CD14-positive monocyte (primary cell): ENCODE measurements at regions of chr9 and their contacts with region 1.

Region 1: DNA sequence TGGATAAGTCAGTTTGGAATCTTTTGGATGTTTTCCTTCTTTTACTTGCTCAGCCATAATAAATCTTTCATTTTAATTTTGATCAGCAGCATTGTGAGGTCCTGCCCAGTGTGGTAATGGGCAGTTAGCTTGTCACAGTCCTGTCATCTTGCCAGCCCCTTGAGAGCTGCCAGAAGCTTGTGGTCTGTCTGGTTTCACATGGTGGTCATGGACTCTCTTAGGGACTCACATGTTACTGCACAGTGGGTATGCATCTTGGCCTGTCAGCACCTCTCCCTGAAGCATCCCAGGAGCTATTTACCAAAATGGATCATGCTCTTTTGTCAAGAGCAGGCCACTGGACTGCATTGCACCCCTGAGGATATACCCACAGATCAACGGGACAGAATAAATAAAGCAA is 60.3 kb downstream of the DAPK1 start:
- DNase-seq: no peak
- H3K4me3 ChIP-seq: no peak overlapping the region
- H3K4me3 Mint-ChIP-seq: no peak overlapping the region
- H3K27ac ChIP-seq: no peak overlapping the region
- H3K27ac Mint-ChIP-seq: peak overlapping the region in 4 of 7 donors; percentile 52 to 96 (median 76)
- H3K4me1 ChIP-seq: peaks cover 50 to 58% of the 10 kb centered on the region in 2 donors
- H3K4me1 Mint-ChIP-seq: peaks cover 61% of the 10 kb centered on the region
- H3K27me3 ChIP-seq: no peaks in the 10 kb centered on the region
- H3K27me3 Mint-ChIP-seq: peaks cover 0 to 6% (median 0%) of the 10 kb centered on the region in 3 donors
- CTCF ChIP-seq: no peak

Region 2: GRCh38 chr9:87336914-87337333 is 221.1 kb before region 1 on chr9:
- intact Hi-C with region 1: loop called in 1 of 2 experiments (anchors 10 kb)
- DNase-seq: peak; percentile 50 to 70 (median 65)
- H3K4me3 ChIP-seq: peak overlapping the region in 1 of 3 experiments; percentile 21
- H3K4me3 Mint-ChIP-seq: peak overlapping the region; percentile 54 to 91
- H3K27ac ChIP-seq: no peak overlapping the region
- H3K27ac Mint-ChIP-seq: no peak overlapping the region
- H3K4me1 ChIP-seq: peaks cover 6 to 7% of the 10 kb centered on the region in 2 donors
- H3K4me1 Mint-ChIP-seq: peaks cover 12% of the 10 kb centered on the region
- H3K27me3 ChIP-seq: peaks cover 18 to 21% of the 10 kb centered on the region in 2 donors
- H3K27me3 Mint-ChIP-seq: peaks cover 19 to 30% (median 30%) of the 10 kb centered on the region in 3 donors
- CTCF ChIP-seq: peak; percentile 86

Region 3: DNA sequence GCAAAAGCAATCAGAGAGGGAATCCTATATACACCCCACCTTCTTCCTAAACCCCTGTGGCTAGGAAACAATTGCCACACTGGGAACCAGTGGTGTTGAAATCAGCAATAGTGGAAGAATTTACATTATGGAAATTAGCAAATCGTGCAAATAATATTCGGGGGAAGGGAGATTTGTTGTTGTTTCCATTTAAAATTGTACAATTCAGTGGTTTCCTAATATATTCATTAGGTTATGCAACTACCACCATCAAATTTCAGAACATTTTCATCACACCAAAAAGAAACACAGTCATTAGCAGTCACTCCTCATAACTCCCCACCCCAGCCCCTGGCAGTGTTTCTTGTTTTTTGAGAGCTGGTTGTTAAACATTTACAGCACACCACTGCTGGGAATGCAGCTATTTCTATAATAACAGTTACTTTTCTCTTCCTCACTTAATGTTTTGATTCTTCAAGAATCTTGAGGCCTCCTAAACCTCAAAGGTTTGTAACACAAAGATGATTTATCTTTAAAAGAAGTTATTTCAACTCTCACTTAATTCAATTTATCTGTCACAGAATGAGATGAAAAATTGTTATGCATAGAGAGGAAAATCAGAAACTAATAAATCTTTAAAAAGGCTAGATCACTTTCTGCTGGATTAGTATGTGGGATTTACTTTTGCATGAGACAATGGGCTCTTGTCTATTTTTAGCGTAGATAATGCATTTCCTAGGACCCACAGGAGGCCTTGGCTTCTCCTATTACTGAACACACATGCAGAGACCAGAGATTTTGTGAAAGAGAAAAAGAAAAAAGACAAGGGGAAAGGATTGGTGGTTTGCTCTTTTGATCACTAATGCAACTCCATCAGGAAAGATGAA is 152.1 kb before region 1 on chr9:
- intact Hi-C with region 1: loop called in 1 of 2 experiments (anchors 10 kb)
- DNase-seq: peak; percentile 77 to 91 (median 86)
- H3K4me3 ChIP-seq: peak overlapping the region in 1 of 3 experiments; percentile 35
- H3K4me3 Mint-ChIP-seq: peak overlapping the region in 1 of 2 donors; percentile 54
- H3K27ac ChIP-seq: peak overlapping the region; percentile 49 to 93
- H3K27ac Mint-ChIP-seq: peak overlapping the region; percentile 91 to 97 (median 94)
- H3K4me1 ChIP-seq: peaks cover 30 to 36% of the 10 kb centered on the region in 2 donors
- H3K4me1 Mint-ChIP-seq: peaks cover 40% of the 10 kb centered on the region
- H3K27me3 ChIP-seq: no peaks in the 10 kb centered on the region
- H3K27me3 Mint-ChIP-seq: peaks cover 1 to 3% (median 2%) of the 10 kb centered on the region in 3 donors
- CTCF ChIP-seq: no peak

Region 4: DNA sequence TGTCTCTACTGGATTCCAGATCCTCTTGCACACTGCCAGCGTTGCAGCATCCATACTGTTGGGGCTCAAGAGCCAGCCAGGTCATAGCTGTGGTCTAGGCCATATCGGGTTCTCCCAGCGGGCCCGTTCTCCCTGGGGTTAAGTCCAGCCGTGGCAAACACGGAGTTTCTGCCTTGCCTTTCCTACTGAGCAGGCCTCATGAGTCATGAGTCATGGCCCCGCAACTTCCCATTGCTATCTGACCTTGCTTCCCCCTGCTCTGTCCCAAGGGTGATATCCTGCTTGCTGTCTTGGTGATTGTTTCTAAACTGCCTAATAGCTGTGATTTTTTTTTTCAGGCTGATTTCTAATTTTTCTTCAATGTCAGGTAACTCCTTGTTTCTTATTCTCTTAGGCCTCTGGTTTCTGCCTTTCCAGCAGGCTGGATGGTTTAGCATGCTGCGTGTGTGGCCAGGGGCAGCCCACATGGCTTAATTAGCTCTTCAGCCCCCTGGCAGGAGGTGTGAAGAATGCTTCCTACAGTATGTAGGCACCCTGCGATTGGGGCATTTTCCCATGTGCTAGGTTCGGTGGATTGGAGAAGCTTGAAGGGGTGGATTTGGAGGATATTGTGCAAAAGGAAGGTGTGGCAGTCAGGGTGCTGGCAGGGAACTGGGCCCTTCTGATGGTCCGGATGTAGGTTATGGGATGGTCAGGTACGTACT is 41.6 kb before region 1 on chr9:
- intact Hi-C with region 1: loop called in 1 of 2 experiments (anchors 5 kb)
- DNase-seq: peak; percentile 94 to 97 (median 97)
- H3K4me3 ChIP-seq: peak overlapping the region in 1 of 3 experiments; percentile 52
- H3K4me3 Mint-ChIP-seq: peak overlapping the region; percentile 18 to 87
- H3K27ac ChIP-seq: peak overlapping the region; percentile 88
- H3K27ac Mint-ChIP-seq: peak overlapping the region; percentile 93 to 99 (median 98)
- H3K4me1 ChIP-seq: peaks cover 79 to 83% of the 10 kb centered on the region in 2 donors
- H3K4me1 Mint-ChIP-seq: peaks cover 85% of the 10 kb centered on the region
- H3K27me3 ChIP-seq: no peaks in the 10 kb centered on the region
- H3K27me3 Mint-ChIP-seq: peaks cover 0 to 2% (median 0%) of the 10 kb centered on the region in 3 donors
- CTCF ChIP-seq: no peak

Region 5: DNA sequence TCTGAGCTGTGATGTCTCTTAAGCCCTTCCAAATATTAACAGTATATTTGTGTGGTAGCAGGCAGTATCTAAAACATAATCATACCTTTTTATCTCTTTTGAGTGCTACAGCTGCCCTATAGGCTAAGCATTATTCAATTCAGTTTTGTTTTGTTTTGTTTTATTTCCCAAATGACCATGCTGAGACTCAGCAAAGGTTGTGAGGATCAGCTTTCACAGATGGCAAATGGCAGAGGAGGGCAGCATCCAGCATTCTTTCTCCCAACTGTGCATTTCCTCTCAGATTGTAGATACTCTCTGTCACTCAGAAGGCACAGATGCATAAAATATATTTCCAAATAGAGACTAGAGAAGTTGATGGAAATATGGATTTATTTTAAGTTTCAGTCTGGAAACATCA is 30.3 kb after region 1 on chr9:
- intact Hi-C with region 1: no loop called
- DNase-seq: no peak
- H3K4me3 ChIP-seq: no peak overlapping the region
- H3K4me3 Mint-ChIP-seq: no peak overlapping the region
- H3K27ac ChIP-seq: peak overlapping the region in 1 of 2 donors; percentile 35
- H3K27ac Mint-ChIP-seq: no peak overlapping the region
- H3K4me1 ChIP-seq: peaks cover 24 to 45% of the 10 kb centered on the region in 2 donors
- H3K4me1 Mint-ChIP-seq: peaks cover 34% of the 10 kb centered on the region
- H3K27me3 ChIP-seq: no peaks in the 10 kb centered on the region
- H3K27me3 Mint-ChIP-seq: peaks cover 0 to 2% (median 0%) of the 10 kb centered on the region in 3 donors
- CTCF ChIP-seq: no peak

Region 6: DNA sequence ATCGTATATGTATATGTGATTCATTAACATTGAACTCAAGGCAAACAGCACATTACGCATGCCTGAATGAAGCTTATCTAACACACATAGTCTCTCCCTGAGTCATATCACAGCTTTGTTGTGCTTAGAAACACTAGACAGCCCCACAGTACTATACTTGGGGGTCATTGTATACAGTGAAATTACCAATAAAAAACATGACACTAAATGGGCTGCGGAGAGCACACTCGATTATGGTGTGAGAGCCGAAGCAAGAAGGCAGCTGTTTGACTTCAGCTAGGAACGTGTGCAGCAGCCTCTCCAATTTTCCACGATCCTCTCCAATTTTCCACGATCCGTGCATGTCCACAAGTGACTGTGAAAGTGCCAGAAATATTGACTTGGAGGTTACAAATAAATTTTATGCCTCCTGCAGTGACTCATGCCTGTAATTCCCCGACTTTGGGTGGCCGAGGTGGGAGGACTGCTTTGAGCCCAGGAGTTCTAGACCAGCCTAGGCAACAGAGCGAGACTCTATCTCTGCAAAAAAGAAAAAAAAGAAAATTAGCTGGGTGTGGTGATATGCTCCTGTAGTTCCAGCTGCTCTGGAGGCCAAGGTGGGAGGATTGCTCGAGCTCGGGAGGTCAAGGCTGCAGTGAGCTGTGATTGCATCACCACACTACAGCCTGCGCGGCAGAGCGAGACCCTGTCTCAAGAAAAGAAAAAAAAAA is 42.1 kb after region 1 on chr9:
- intact Hi-C with region 1: loop called (anchors 5 to 10 kb)
- DNase-seq: no peak
- H3K4me3 ChIP-seq: no peak overlapping the region
- H3K4me3 Mint-ChIP-seq: no peak overlapping the region
- H3K27ac ChIP-seq: peak overlapping the region; percentile 81 to 97
- H3K27ac Mint-ChIP-seq: peak overlapping the region; percentile 16 to 97 (median 95)
- H3K4me1 ChIP-seq: peaks cover 36 to 58% of the 10 kb centered on the region in 2 donors
- H3K4me1 Mint-ChIP-seq: peaks cover 78% of the 10 kb centered on the region
- H3K27me3 ChIP-seq: no peaks in the 10 kb centered on the region
- H3K27me3 Mint-ChIP-seq: peaks cover 0 to 7% (median 0%) of the 10 kb centered on the region in 3 donors
- CTCF ChIP-seq: no peak

Region 7: DNA sequence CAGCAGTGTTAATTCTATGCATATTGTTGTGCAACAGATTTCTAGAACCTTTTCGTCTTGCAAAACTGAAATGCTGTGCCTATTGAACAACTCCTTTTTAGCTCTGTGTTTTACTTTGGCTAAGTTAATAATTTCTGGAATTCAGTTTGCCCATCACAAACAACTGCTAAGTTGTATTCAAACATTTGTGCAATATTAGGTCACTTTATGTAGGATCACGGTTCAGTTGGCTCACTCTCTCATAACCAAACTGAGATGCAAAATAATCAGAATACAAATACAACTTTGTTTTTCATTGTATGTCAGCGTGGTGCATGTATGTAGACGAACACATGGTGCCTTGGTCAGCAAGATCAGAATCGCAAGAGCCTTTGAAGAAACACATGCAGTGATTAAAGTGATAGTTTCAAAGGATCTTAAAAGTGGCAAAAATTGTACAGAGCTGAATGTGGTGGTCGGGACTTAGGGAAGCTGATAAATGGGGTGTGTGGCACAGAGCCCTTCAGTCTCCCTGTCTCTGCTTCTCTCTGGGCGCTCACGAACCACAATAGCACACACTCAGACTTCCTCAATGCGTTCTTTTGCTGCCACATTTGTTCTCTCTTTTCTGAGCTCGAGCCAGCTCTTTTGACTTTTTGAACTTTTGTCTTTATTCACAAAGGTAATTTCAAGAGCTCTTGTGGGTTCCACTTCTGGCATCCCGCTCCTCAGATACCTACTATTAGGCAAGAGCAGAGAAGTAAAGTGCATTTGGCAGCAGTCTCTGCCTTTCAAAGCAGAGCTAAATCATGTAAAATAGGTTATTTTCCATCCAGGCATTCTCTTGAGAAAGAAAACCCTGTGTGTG is 55.5 kb after region 1 on chr9:
- intact Hi-C with region 1: loop called (anchors 5 to 10 kb)
- DNase-seq: peak; percentile 54 to 60 (median 59)
- H3K4me3 ChIP-seq: peak overlapping the region in 1 of 3 experiments; percentile 37
- H3K4me3 Mint-ChIP-seq: peak overlapping the region in 1 of 2 donors; percentile 69
- H3K27ac ChIP-seq: peak overlapping the region; percentile 57 to 93
- H3K27ac Mint-ChIP-seq: peak overlapping the region; percentile 90 to 97 (median 93)
- H3K4me1 ChIP-seq: peaks cover 57 to 82% of the 10 kb centered on the region in 2 donors
- H3K4me1 Mint-ChIP-seq: peaks cover 88% of the 10 kb centered on the region
- H3K27me3 ChIP-seq: no peaks in the 10 kb centered on the region
- H3K27me3 Mint-ChIP-seq: peaks cover 0 to 3% (median 1%) of the 10 kb centered on the region in 3 donors
- CTCF ChIP-seq: no peak